ENCODE measurements at regions of chr16 and their contacts with region 1.

Region 1: GRCh38 chr16:69565671-69566239 is at the start of gene NFAT5:
- DNase-seq: peak; percentile 83 to 97 (median 90)
- ATAC-seq: peak; percentile 82
- H3K4me3 ChIP-seq: peak within 1 kb of the TSS; percentile 78 to 91
- H3K4me3 Mint-ChIP-seq: peak within 1 kb of the TSS; percentile 96
- H3K27ac ChIP-seq: peak within 1 kb of the TSS; percentile 87 to 89
- H3K27ac Mint-ChIP-seq: peak within 1 kb of the TSS; percentile 98
- H3K4me1 ChIP-seq: peaks cover 36% of the 10 kb centered on the region
- H3K4me1 Mint-ChIP-seq: peaks cover 46% of the 10 kb centered on the region
- H3K27me3 ChIP-seq: no peaks in the 10 kb centered on the region
- H3K27me3 Mint-ChIP-seq: no peaks in the 10 kb centered on the region
- CTCF ChIP-seq: no peak
- total RNA-seq, gene NFAT5: 22.0 to 27.6 TPM

Region 2: DNA sequence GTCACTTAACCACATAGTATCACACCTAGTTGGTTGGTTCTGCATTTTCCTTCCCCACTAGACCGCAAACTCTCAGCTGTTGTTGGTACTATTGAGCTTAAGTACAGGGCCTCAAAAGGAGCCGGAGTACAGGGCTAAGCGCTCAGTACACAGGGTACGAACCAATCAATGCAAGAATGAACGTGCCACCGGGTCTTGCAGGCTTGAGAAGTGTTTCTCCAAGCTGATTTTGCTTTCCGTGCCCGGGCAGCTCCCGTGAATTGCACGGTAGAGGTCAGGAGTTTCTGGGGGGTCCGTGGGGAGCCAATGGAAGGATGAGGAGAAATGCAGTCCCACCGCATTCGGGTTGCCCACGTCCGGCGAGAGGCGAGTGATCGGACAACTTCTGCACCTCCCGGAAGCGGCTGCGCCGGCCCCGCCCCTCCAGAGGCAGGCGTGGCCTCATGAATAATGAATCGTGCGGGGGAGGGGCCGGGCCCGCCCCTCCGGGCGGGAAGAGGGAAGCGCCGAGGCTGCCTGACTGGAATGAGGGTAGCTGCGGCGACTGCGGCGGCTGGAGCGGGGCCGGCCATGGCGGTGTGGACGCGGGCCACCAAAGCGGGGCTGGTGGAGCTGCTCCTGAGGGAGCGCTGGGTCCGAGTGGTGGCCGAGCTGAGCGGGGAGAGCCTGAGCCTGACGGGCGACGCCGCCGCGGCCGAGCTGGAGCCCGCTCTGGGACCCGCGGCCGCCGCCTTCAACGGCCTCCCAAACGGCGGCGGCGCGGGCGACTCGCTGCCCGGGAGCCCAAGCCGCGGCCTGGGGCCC is 378.9 kb before region 1 on chr16 and contains the start of gene SNTB2:
- CTCF ChIA-PET with region 1: no interaction called
- POLR2A ChIA-PET with region 1: no interaction called
- intact Hi-C with region 1: loop called (anchors 2 to 10 kb)
- DNase-seq: peak; percentile 48 to 91 (median 80)
- ATAC-seq: peak; percentile 77
- H3K4me3 ChIP-seq: peak within 1 kb of the TSS; percentile 75 to 82
- H3K4me3 Mint-ChIP-seq: peak within 1 kb of the TSS; percentile 99
- H3K27ac ChIP-seq: peak within 1 kb of the TSS; percentile 58 to 69
- H3K27ac Mint-ChIP-seq: peak within 1 kb of the TSS; percentile 97
- H3K4me1 ChIP-seq: peaks cover 32% of the 10 kb centered on the region
- H3K4me1 Mint-ChIP-seq: peaks cover 45% of the 10 kb centered on the region
- H3K27me3 ChIP-seq: no peaks in the 10 kb centered on the region
- H3K27me3 Mint-ChIP-seq: no peaks in the 10 kb centered on the region
- CTCF ChIP-seq: no peak
- total RNA-seq, gene SNTB2: 8.1 to 9.1 TPM

Region 3: DNA sequence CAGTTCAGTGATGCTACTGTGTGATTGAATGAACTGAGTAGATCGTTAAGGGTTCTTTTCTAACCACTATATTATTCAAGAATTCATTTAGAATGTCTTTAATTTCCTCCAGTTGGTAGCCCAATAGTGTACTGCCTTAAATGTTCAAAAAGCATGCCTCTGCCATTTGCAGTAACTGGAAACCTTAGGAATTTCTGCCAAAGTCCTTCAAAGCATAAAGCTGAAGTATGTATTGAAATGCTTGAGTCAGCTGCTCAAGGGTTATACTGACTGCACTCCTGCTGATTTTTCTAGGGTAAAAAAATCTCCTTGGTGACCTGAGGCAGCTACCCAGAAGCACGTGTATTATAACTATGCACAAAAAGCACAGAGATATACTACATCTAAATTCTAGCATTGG is 322.3 kb before region 1 on chr16:
- CTCF ChIA-PET with region 1: no interaction called
- POLR2A ChIA-PET with region 1: no interaction called
- intact Hi-C with region 1: no loop called
- DNase-seq: no peak
- ATAC-seq: no peak
- H3K4me3 ChIP-seq: no peak overlapping the region
- H3K4me3 Mint-ChIP-seq: no peak overlapping the region
- H3K27ac ChIP-seq: no peak overlapping the region
- H3K27ac Mint-ChIP-seq: no peak overlapping the region
- H3K4me1 ChIP-seq: no peaks in the 10 kb centered on the region
- H3K4me1 Mint-ChIP-seq: no peaks in the 10 kb centered on the region
- H3K27me3 ChIP-seq: no peaks in the 10 kb centered on the region
- H3K27me3 Mint-ChIP-seq: no peaks in the 10 kb centered on the region
- CTCF ChIP-seq: no peak

Region 4: DNA sequence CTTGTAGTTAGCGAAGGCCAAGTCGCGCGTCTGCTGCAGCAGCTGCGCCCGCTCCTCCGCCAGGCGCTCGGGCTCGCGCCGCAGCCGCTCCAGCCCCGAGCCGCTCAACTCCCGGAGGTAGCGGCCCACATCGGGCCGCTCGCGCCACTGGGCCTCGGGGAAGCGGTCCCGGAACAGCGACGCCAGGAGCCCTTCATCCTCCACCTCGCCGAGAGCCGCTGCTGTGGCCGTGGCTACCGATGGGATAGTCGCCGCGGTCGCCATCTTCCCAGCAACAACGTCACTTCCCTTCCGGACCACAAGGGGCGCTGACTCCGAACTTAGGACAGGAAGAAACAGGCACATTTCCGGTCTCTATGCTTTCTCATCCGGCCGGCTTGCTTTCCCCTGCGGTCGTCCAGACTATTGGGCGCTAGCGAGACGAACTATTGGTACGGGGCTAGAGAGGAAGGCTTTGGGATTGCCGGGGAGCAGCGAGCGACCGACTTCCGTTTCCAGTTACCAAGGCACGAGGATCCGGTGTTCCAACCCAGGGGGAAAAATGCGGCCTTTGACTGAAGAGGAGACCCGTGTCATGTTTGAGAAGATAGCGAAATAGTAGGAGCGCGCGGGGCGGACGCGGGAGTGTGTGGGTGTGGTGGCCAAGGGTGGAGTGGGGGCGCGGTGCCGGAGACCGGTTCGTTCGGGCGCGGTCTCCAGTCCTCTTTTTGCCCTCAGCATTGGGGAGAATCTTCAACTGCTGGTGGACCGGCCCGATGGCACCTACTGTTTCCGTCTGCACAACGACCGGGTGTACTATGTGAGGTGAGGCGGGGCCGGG is 226.3 kb before region 1 on chr16 and contains the starts of genes COG8 and NIP7:
- CTCF ChIA-PET with region 1: no interaction called
- POLR2A ChIA-PET with region 1: no interaction called
- intact Hi-C with region 1: loop called (anchors 5 kb)
- DNase-seq: peak; percentile 82 to 96 (median 91)
- ATAC-seq: peak; percentile 89
- H3K4me3 ChIP-seq: peak within 1 kb of the TSS; percentile 82 to 86
- H3K4me3 Mint-ChIP-seq: peak within 1 kb of the TSS; percentile 100
- H3K27ac ChIP-seq: peak within 1 kb of the TSS; percentile 70 to 85
- H3K27ac Mint-ChIP-seq: peak within 1 kb of the TSS; percentile 98
- H3K4me1 ChIP-seq: peaks cover 26% of the 10 kb centered on the region
- H3K4me1 Mint-ChIP-seq: peaks cover 58% of the 10 kb centered on the region
- H3K27me3 ChIP-seq: no peaks in the 10 kb centered on the region
- H3K27me3 Mint-ChIP-seq: no peaks in the 10 kb centered on the region
- CTCF ChIP-seq: peak; percentile 85
- total RNA-seq, gene COG8: 19.3 to 19.6 TPM
- total RNA-seq, gene NIP7: 44.9 to 50.0 TPM

Region 5: GRCh38 chr16:69424053-69424934 is 141.5 kb before region 1 on chr16 and contains the start of gene CYB5B:
- CTCF ChIA-PET with region 1: interaction called, 3 read pairs
- POLR2A ChIA-PET with region 1: interaction called, 6 read pairs
- intact Hi-C with region 1: loop called (anchors 1 kb)
- DNase-seq: peak; percentile 90 to 99 (median 95)
- ATAC-seq: peak; percentile 94
- H3K4me3 ChIP-seq: peak within 1 kb of the TSS; percentile 97 to 99
- H3K4me3 Mint-ChIP-seq: peak within 1 kb of the TSS; percentile 98
- H3K27ac ChIP-seq: peak within 1 kb of the TSS; percentile 86 to 87
- H3K27ac Mint-ChIP-seq: peak within 1 kb of the TSS; percentile 95
- H3K4me1 ChIP-seq: peaks cover 8% of the 10 kb centered on the region
- H3K4me1 Mint-ChIP-seq: peaks cover 35% of the 10 kb centered on the region
- H3K27me3 ChIP-seq: no peaks in the 10 kb centered on the region
- H3K27me3 Mint-ChIP-seq: no peaks in the 10 kb centered on the region
- CTCF ChIP-seq: no peak
- total RNA-seq, gene CYB5B: 16.2 to 18.6 TPM

Region 6: DNA sequence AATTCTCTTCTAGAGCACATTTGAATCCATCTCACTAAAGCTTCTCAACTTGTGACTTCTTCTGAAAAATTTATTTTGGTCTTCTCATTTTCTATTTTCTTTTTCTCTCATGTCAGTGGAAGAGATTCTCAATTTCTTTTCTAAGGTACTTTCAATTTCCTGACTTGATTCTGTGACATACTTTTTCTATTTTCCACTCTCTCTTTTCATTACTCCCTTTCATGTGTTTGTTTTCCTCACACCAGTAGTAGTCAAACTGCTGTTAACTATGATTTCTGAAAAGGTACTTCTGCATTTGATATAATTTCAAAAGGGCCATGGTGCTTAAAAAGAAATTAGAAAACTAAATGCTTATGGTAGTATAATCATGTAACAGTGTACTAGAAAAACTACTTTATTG is 41.9 kb after region 1 on chr16:
- CTCF ChIA-PET with region 1: no interaction called
- POLR2A ChIA-PET with region 1: interaction called, 4 read pairs
- intact Hi-C with region 1: loop called in 1 of 2 experiments (anchors 2 kb)
- DNase-seq: no peak
- ATAC-seq: no peak
- H3K4me3 ChIP-seq: no peak overlapping the region
- H3K4me3 Mint-ChIP-seq: no peak overlapping the region
- H3K27ac ChIP-seq: no peak overlapping the region
- H3K27ac Mint-ChIP-seq: no peak overlapping the region
- H3K4me1 ChIP-seq: peaks cover 2% of the 10 kb centered on the region
- H3K4me1 Mint-ChIP-seq: peaks cover 47% of the 10 kb centered on the region
- H3K27me3 ChIP-seq: no peaks in the 10 kb centered on the region
- H3K27me3 Mint-ChIP-seq: no peaks in the 10 kb centered on the region
- CTCF ChIP-seq: no peak

Region 7: DNA sequence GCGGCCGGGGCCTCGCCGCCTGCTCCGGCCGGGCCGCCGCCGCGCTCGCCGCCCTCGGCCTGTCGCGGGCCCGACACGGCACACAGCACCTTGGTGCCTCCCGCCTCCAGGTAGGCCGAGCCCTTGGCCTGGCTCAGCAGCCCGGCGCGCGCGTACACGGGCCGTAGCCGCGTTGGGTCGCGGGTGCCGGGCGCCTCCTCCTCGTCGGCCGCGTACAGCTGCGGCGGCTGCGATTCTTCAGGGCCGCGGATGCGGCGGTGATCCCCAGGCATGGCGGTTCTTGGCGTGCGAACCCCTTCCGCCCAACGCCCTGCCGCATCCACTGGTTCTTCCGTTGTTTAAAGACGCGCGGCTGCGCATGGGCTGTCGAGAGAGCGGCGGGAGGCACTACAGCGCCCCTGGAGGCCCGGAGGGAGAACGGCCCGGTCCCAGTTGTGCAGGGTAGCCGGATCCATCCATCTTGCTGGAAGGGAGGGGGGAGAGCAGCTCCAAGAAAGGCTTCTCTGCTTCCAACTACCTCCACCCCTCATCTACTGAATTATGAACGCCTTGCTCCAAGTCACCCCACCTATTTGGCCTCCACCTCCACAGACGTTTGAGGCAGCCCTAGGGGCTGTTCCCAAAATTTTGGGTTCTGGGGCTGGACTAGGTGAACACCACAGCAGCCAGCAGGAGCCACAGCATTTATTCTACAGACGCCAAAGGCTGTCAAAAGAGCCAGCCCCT is 686.0 kb after region 1 on chr16 and contains the start of gene EXOSC6:
- CTCF ChIA-PET with region 1: no interaction called
- POLR2A ChIA-PET with region 1: no interaction called
- intact Hi-C with region 1: loop called in 1 of 2 experiments (anchors 5 kb)
- DNase-seq: peak; percentile 80 to 97 (median 92)
- ATAC-seq: peak; percentile 97
- H3K4me3 ChIP-seq: peak within 1 kb of the TSS; percentile 41 to 62
- H3K4me3 Mint-ChIP-seq: peak within 1 kb of the TSS; percentile 92
- H3K27ac ChIP-seq: peak within 1 kb of the TSS; percentile 60 to 85
- H3K27ac Mint-ChIP-seq: peak within 1 kb of the TSS; percentile 97
- H3K4me1 ChIP-seq: peaks cover 18% of the 10 kb centered on the region
- H3K4me1 Mint-ChIP-seq: peaks cover 26% of the 10 kb centered on the region
- H3K27me3 ChIP-seq: no peaks in the 10 kb centered on the region
- H3K27me3 Mint-ChIP-seq: no peaks in the 10 kb centered on the region
- CTCF ChIP-seq: peak; percentile 80
- total RNA-seq, gene EXOSC6: 40.6 to 43.6 TPM

Measured in CD8-positive, alpha-beta T cell (primary cell).